H1 (cell line): ENCODE measurements at regions of chr12 and their contacts with region 1.

Region 1: DNA sequence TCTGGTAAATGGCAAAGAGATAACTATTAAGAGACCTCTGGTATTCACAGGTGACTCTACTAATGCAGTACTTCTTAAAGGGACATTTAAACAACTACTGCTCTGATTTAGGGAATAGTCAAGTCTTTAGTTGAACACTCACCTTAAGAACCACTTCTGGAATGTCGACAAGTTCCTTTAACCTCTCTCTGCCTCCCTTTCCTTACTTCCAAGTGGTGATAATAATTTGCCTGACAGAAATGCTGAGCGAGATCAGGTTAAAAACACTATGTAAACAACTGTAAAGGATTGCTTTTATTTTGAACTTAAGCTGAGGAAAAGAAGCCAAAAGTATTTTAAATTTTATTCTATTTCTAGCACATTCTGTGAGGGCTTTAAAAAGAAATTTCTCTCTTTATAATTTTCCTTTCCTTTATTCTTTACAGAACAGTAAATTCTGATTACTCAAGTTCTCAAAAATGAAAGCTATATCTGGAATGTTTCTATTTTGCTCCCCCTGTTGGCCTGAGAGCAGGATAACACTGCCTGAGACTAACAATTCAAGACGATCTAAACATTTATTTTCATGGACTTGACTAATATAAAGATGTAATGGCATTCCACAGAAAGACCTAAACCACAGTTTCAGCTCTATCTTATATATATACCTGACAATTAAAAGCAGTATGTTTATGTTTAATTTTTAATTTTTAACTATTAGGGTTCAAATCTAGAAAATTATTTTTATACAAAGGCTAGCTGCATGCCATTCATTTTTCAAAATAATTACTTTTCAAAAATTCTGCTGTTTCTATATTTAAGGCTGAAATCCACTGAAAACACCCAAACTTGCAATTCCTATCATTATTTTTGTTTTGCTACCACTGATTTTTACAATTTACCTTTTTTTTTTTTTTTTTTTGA is 29.2 kb downstream of the ZCCHC8 start:
- DNase-seq: no peak
- H3K4me3 ChIP-seq: no peak overlapping the region
- H3K27ac ChIP-seq: 0 out of 2 replicates have a peak overlapping the region, but pooled peaks have one; percentile 16
- H3K4me1 ChIP-seq: no peaks in the 10 kb centered on the region
- H3K27me3 ChIP-seq: no peaks in the 10 kb centered on the region
- CTCF ChIP-seq: peak in 2 of 3 experiments; percentile 45 to 56; a peak in 2 of 4 replicates
- EP300 ChIP-seq: no peak
- POLR2A ChIP-seq: no peak
- RAD21 ChIP-seq: peak; percentile 59 to 62

Region 2: GRCh38 chr12:122250047-122250446 is 221.5 kb before region 1 on chr12:
- CTCF ChIA-PET with region 1: no interaction called
- POLR2A ChIA-PET with region 1: no interaction called
- DNase-seq: no peak
- H3K4me3 ChIP-seq: no peak overlapping the region
- H3K27ac ChIP-seq: no peak overlapping the region
- H3K4me1 ChIP-seq: no peaks in the 10 kb centered on the region
- H3K27me3 ChIP-seq: no peaks in the 10 kb centered on the region
- CTCF ChIP-seq: no peak
- EP300 ChIP-seq: no peak
- POLR2A ChIP-seq: no peak
- RAD21 ChIP-seq: no peak

Region 3: GRCh38 chr12:122336015-122336946 is 135.3 kb before region 1 on chr12:
- CTCF ChIA-PET with region 1: interaction called, 45 read pairs
- POLR2A ChIA-PET with region 1: interaction called, 3 read pairs
- DNase-seq: peak in 1 of 2 experiments; percentile 55
- H3K4me3 ChIP-seq: no peak overlapping the region
- H3K27ac ChIP-seq: no peak overlapping the region
- H3K4me1 ChIP-seq: no peaks in the 10 kb centered on the region
- H3K27me3 ChIP-seq: no peaks in the 10 kb centered on the region
- CTCF ChIP-seq: peak; percentile 62 to 76 (median 68)
- EP300 ChIP-seq: no peak
- POLR2A ChIP-seq: no peak
- RAD21 ChIP-seq: peak; percentile 74 to 80

Region 4: DNA sequence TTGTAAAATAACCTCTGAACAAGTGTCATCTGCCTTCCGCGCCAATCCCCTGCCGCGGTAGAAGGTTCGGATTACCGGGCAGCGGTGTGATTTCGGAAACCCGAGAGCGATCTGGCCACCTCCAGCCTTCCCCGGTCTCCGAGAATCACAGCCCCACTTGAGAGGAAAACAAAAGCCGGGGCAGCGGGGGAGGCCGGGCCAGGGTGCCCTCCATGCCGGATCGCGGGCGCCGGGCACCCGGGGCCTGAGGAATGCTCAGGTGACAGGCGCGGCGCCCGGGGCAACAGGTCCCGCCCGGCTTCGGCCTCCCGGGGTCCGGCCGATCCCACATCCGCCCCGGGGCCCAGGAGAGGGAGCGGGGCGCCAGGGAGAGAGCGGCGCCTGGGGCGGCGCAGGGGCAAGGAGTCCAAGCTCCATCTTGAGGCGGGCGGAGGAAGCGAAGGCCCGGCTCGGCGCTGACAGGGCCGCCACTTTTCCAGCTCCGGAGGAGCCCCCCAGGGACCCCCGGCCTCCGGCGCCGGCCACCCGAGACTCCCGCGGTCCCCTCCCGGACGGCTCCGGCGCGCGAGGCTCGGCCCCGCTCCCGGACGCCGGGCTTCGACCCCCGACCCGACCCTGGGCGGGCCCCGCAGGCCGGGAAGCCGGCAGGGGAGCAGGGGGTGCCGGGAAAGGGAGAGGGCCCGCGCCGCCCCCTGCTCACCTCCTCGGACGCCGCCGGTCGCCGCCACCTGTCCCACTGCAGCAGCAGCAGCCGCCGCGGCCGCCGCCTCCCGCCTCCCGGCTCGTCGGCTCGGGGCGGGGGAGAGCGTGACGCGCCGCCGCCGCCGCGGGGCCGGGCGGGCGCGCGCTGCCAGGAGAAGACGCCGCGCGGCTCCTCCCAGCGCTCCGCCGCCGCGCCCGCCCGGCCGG is 49.5 kb before region 1 on chr12 and contains the start of gene CLIP1:
- CTCF ChIA-PET with region 1: interaction called, 14 read pairs
- POLR2A ChIA-PET with region 1: interaction called, 3 read pairs
- DNase-seq: peak in 1 of 2 experiments; percentile 81
- H3K4me3 ChIP-seq: peak within 1 kb of the TSS; percentile 67 to 81 (median 72)
- H3K27ac ChIP-seq: peak within 1 kb of the TSS; percentile 41; the same call in 1 of the 2 replicates
- H3K4me1 ChIP-seq: peaks cover 0 to 10% (median 4%) of the 10 kb centered on the region in 4 experiments; a peak in 3 of 7 replicates
- H3K27me3 ChIP-seq: no peaks in the 10 kb centered on the region
- CTCF ChIP-seq: peak; percentile 10 to 49 (median 48)
- EP300 ChIP-seq: no peak
- POLR2A ChIP-seq: peak; percentile 31 to 40
- RAD21 ChIP-seq: peak in 1 of 2 experiments; percentile 45; a peak in 2 of 4 replicates
- total RNA-seq, gene CLIP1: 26.6 and 27.6 TPM in 2 replicates

Region 5: DNA sequence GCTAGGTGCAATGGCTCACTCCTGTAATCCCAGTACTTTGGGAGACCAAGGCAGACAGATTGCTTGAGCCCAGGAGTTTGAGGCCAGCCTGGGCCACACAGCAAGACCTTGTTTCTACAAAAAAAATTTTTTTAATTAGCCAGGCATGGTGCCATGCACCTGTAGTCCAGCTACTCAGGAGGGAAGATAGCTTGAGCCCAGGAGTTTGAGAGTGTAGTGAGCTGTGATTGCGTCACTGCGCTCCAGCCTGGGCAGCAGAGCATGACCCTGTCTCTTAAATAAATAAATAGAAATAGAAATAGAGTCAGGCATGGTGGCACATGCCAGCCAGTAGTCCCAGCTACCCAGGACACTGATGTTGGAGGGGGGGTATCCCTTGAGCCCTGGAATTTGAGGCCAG is 12.4 kb before region 1 on chr12:
- CTCF ChIA-PET with region 1: interaction called, 11 read pairs
- POLR2A ChIA-PET with region 1: no interaction called
- DNase-seq: no peak
- H3K4me3 ChIP-seq: no peak overlapping the region
- H3K27ac ChIP-seq: no peak overlapping the region
- H3K4me1 ChIP-seq: no peaks in the 10 kb centered on the region
- H3K27me3 ChIP-seq: no peaks in the 10 kb centered on the region
- CTCF ChIP-seq: no peak
- EP300 ChIP-seq: no peak
- POLR2A ChIP-seq: no peak
- RAD21 ChIP-seq: no peak

Region 6: GRCh38 chr12:122526683-122527477 is 55.3 kb after region 1 on chr12 and contains the starts of genes KNTC1 and RSRC2:
- CTCF ChIA-PET with region 1: no interaction called
- POLR2A ChIA-PET with region 1: interaction called, 13 read pairs
- DNase-seq: peak; percentile 93 to 98
- H3K4me3 ChIP-seq: peak within 1 kb of the TSS; percentile 96 to 99 (median 98)
- H3K27ac ChIP-seq: peak within 1 kb of the TSS; percentile 100
- H3K4me1 ChIP-seq: no peaks in the 10 kb centered on the region; a peak in 4 of 7 replicates
- H3K27me3 ChIP-seq: no peaks in the 10 kb centered on the region
- CTCF ChIP-seq: no peak; a peak in 1 of 4 replicates
- EP300 ChIP-seq: no peak; a peak in 1 of 3 replicates
- POLR2A ChIP-seq: peak; percentile 99
- RAD21 ChIP-seq: no peak
- total RNA-seq, gene KNTC1: 66.6 and 80.2 TPM in 2 replicates
- total RNA-seq, gene RSRC2: 71.4 and 72.8 TPM in 2 replicates

Region 7: GRCh38 chr12:122602456-122602855 is 130.9 kb after region 1 on chr12:
- CTCF ChIA-PET with region 1: no interaction called
- POLR2A ChIA-PET with region 1: no interaction called
- DNase-seq: no peak
- H3K4me3 ChIP-seq: no peak overlapping the region
- H3K27ac ChIP-seq: no peak overlapping the region
- H3K4me1 ChIP-seq: no peaks in the 10 kb centered on the region
- H3K27me3 ChIP-seq: no peaks in the 10 kb centered on the region
- CTCF ChIP-seq: no peak
- EP300 ChIP-seq: no peak
- POLR2A ChIP-seq: no peak
- RAD21 ChIP-seq: no peak